ENCODE measurements at regions of chr12 and their contacts with region 1.

Region 1: DNA sequence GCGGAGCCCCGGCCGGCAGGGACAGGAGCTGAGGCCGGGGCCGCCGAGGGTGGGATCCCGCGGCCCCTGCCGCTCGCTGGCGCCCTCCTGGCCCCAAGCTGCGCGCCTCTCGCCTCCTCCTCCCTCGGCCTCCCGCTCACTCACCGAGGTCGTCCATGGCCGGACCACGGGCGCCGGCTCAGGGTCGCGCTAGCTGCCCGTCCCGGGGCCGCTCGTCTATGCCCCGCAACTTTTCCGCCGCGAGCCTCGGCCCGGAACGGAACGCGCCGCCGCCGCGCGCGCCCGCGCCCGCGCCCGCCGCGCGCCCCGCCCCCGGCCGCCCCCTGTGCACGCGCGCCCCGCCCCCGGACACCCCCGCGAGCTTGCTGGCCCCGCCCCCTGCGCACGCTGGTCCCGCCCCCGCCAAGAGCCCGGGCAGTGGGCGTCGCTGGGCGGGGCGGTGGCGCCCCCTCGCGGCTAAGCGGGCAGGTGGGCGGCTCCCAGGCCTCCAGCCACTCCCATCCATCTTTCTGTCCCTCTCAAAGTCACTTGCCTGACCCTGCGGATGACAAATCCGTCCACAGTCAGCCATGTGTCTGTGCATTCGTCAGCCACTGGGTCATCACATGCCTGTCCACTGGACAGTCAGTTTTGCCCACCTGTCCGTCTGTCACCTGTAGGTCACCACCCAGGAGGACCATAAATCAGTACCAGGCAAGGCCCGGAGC is at the start of gene PXN:
- DNase-seq: peak; percentile 95
- ATAC-seq: peak; percentile 92
- total RNA-seq, gene PXN: 63.7 TPM

Region 2: DNA sequence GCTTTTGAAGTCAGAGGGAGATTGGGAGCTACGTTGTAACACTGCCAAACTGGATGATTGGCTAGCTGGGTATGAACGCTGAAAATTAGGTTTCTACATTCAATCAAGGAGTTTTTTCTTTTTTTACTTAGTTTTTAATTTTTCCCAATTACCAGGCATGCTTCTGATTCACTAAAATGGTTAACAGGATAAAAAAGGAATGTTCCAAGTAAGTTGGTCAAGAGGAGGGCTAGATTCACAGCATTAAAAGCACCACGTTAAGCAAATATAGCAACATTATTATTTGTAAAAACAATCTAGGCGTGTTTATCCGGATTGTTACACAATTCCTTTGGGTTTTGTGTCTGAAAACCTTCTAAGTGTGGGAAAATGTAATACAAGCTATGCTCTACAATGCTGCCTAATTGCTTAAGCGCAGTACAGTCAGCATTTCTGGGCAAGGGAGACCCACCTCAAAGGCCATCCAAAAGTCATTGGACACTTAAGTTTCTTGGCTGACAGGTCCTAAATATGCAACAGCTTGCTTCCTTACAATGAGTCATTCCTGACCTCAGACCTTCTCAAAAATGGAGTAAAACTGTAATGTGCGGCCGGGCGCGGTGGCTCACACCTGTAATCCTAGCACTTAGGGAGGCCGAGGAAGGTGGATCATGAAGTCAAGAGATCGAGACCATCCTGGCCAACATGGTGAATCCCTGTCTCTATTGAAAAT is 65.9 kb before region 1 on chr12:
- intact Hi-C with region 1: loop called (anchors 2 kb)
- DNase-seq: no peak
- ATAC-seq: peak; percentile 51

Region 3: DNA sequence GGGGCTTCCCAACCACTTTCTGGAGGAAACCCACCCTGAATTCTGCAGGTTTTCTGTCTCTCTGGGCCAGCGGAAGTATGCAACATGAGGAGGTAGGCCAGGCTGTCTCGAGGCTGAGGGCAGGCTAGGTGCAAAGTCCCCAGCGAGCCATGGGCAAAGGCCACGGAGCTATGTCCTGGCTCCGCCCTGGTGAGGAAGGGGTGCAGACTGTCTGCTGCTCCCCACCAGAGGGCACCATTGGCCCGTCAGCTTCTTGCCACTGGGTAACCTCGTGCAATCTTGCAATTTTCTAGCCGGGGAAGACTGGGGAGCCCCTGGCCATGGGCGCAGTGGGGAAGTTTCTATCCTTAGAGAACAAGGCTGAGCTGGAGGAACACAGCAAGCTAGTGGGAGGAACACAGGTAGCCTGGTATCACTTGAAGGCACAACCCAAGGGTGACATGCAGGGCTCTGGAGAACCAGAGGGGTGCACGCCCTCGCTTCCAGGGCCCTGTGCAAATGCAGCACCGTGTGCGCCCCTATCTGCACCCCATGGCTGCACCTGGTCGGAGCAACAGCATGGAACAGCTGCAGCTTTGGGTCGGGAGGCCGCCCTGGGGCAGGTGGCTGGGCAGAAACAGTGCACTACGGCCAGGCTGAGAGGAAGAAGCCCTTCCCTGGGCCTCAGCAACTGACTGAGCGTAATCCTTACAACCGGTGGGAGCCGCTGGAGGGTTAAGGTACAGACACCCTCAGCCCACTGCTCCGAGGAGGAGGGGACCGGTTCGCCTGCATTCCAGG is 37.1 kb before region 1 on chr12:
- intact Hi-C with region 1: loop called (anchors 1 kb)
- DNase-seq: peak; percentile 91
- ATAC-seq: peak; percentile 78

Region 4: GRCh38 chr12:120421701-120422100 is 156.1 kb after region 1 on chr12:
- intact Hi-C with region 1: no loop called
- DNase-seq: no peak
- ATAC-seq: no peak